ENCODE measurements at regions of chr3 and their contacts with region 1.

Region 1: GRCh38 chr3:64685800-64686445 is 1.9 kb downstream of the ADAMTS9 start:
- DNase-seq: peak; percentile 93
- ATAC-seq: peak; percentile 93

Region 2: DNA sequence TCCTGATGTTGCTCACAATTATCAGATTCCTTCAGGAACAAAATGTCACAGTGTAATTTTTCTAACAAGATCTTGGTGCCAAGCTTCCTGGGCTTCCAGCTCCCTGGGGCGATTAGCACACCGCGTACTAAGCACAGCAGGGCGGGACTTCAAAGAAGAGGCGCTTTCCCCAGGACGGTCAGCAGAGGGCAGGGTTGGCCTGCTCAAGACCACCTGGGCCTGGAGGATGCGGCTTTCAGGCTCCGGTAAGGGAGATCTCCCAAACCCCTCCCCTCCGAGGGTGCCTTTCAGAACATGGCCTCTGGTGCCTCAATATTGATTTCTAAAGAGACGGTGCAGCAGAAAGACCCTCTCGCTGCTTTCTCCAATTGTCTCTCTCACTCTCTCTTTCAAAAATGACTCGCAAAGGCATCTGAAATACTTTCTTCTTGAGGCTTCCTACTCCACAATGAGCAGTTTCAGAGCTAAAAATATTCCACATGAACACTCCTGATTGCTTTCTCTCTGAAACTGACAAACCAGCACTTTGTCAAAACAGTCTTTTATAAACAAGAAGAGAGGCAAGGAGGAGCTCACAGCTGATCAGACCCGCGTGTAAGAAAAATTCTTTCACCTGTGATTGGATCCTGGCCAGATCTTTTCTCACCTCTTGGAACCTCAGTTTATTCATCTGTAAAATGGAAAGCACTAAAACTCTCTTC is 152.2 kb before region 1 on chr3:
- intact Hi-C with region 1: loop called (anchors 2 kb)
- DNase-seq: peak; percentile 89
- ATAC-seq: peak; percentile 97

Region 3: DNA sequence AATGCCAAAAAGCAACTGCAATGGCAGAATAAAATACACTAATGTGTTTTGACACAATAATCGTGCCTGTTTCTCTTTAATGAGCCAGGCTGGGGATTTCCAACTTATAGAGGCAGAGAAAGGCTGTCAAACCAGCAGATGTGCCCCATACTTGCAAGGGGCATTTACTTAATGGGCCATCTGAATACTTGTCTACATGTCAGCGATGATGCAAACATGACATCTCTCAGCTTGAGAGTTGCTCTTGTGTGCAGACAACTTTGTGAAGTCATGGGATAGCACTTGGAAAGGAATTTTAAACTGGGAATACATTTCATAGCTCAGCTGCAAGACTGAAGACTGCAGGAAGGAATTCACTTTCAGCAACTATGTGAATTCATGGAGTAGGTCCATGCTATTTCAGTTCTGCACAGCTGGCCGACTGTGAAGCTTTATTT is 129.3 kb after region 1 on chr3:
- intact Hi-C with region 1: loop called (anchors 5 kb)
- DNase-seq: no peak
- ATAC-seq: peak; percentile 85

Region 4: DNA sequence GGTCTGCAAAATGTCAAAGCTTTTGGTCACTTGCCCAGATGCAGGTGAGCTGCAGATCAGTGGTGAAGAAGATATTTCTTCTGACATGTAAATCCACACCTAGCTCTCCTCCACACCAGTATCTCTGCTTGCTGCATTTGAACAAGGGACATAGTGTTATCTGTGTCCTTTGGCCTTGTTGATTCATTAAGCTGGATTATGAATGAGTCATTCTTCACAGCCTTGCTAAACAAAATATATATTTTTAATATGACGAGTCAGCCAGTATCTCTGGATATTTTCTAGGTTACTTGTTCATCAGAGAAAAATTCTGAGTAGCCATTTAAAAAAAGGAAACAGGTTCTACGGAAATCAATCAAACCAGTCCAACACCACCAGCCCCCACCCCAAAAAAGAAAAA is 192.4 kb after region 1 on chr3:
- intact Hi-C with region 1: no loop called
- DNase-seq: no peak
- ATAC-seq: no peak

Region 5: GRCh38 chr3:64945171-64945729 is 259.3 kb after region 1 on chr3:
- intact Hi-C with region 1: loop called (anchors 10 kb)
- DNase-seq: no peak
- ATAC-seq: peak; percentile 66

Region 6: DNA sequence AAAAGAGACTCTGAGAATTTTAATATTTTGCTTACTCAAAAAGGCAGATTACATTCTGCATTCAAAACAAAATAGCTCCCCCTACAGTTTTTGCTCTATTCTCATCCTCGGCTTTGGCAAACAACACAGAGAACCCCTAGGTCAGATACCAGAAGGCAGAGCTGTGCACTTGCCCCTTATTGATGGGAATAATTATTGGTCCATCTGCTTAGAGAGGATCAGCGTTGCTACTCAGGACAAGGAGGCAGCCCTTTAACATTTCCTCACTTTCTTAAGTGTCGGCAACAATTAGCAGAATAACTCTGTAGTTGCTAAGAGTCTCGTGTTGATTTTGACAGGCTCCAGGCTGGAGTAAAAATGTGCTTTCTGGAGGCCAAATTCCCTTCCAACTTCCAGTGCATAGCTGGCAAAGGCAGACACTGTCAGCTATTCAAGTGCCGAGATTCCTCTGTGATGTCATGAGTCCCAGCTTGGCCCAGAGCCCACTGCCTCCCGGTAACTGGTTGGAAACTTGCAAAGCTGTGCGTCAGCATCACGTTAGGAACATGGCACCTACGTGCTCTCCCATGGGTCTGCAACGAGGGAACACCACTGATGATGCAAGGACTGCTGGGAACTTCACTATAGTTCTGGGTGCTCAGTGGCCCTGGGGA is 484.6 kb after region 1 on chr3:
- intact Hi-C with region 1: loop called (anchors 5 kb)
- DNase-seq: peak; percentile 86
- ATAC-seq: peak; percentile 88

Measured in Right ventricle myocardium inferior (tissue), 1 donor.